Activated T-helper 1 cell treated with anti-CD3 and anti-CD28 coated beads, Interleukin-12 subunit alpha, Interleukin-12 subunit beta, Interleukin-2, Interleukin-4 antibody, amounts not matched to agents 30 ng/mL and 10 ng/mL and 1 ng/mL, durations not matched to agents 14 hours and 24 hours and 36 hours (primary cell): ENCODE measurements at regions of chr6 and their contacts with region 1.

Region 1: DNA sequence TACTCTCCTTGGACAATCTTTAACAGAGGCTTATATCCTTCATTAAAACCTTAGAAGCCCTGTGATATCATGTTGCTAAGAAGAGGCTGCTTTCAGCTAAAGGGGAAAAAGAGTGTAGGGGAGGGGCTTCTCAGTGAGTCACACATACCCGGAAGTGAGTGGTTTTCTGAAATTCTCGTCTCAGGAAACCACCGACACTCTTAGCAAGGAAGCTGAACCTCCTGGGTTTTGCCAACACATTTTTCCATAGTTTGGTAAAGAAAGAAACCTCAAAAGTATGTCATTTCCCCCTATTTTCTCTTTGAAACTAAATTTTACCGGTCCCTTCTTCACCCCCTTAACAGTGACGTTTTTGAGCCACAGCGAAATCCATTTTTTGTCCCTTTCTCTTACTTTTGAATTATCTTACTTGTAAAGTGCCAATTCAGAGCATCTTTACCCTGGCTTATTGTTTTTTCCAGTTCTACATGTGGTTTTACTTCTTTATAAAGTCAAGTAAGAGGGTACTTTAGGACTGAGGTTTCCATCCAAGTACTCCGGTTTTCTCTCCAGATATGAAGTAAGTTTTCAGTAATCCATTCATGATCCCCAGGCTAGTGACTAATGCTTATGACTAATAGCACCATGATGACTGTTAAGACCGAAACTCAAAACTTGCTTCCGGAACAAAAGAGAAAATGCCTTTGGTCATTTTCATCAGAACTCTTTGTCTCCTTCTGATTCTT is 219.3 kb downstream of the ARHGAP18 start:
- DNase-seq: peak; percentile 69
- H3K4me3 Mint-ChIP-seq: peak overlapping the region; percentile 77
- H3K27ac Mint-ChIP-seq: peak overlapping the region; percentile 99
- H3K4me1 Mint-ChIP-seq: peaks cover 68% of the 10 kb centered on the region
- H3K27me3 Mint-ChIP-seq: no peaks in the 10 kb centered on the region

Region 2: GRCh38 chr6:129280749-129281148 is 209.9 kb before region 1 on chr6:
- intact Hi-C with region 1: loop called (anchors 5 kb)
- DNase-seq: peak; percentile 34
- H3K4me3 Mint-ChIP-seq: peak overlapping the region; percentile 6
- H3K27ac Mint-ChIP-seq: no peak overlapping the region
- H3K4me1 Mint-ChIP-seq: peaks cover 24% of the 10 kb centered on the region
- H3K27me3 Mint-ChIP-seq: peaks cover 13% of the 10 kb centered on the region

Region 3: DNA sequence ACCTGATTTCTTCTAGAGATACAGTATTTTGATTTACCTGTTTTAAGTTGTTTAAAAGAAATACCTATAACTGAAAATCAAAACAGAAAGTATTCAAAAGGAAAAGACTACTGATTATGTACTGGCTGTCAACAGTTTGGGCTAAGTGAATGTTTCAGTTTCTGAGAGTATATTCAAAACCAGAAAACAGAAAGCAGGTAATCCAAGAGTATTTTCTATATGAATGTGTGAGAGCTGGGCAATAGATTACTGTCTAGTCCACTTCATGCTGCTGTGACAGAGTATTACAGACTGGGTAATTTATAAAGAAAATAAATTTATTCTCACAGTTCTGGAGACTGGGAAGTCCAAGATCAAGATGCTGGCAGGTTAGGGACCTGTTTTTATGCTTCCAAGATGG is 41.7 kb before region 1 on chr6:
- intact Hi-C with region 1: loop called (anchors 1 kb)
- DNase-seq: no peak
- H3K4me3 Mint-ChIP-seq: peak overlapping the region; percentile 6
- H3K27ac Mint-ChIP-seq: no peak overlapping the region
- H3K4me1 Mint-ChIP-seq: peaks cover 74% of the 10 kb centered on the region
- H3K27me3 Mint-ChIP-seq: peaks cover 1% of the 10 kb centered on the region

Region 4: DNA sequence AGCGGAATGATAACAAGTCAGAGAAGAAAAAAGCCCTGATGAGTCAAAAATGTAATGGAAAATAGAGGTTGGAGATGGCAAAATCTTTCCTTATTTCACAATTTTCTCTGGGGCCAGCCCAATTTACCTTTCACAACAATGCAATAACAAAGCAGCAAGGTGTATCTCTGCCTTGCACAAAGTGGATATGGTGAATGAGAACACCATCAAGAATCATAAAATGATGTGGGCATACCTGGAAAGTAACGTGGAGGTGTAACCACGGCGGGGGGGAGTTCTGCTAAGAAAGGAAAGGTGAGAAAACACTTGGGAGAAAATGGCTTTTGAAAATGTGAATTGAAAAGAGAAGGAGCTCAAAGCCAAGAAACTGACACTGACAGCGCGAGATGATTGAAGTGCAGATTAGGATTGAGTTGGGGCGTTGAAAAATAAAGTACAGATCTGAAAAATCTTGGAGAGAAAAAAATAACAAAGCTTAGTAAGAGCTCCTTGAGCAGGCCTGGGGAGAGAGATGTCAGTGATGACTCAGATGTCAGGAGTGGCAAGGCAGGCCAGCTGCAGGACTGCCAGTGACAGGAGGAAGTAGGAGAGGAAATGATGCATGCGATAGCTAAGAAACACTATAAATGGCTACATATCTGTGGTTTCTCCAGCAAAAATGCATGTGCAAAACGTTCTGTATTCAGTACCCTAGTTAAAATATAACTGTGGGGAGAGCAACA is 193.1 kb after region 1 on chr6:
- intact Hi-C with region 1: loop called (anchors 2 kb)
- DNase-seq: peak; percentile 55
- H3K4me3 Mint-ChIP-seq: peak overlapping the region; percentile 47
- H3K27ac Mint-ChIP-seq: peak overlapping the region; percentile 77
- H3K4me1 Mint-ChIP-seq: peaks cover 63% of the 10 kb centered on the region
- H3K27me3 Mint-ChIP-seq: no peaks in the 10 kb centered on the region

Region 5: GRCh38 chr6:130215526-130215925 is 724.8 kb after region 1 on chr6:
- intact Hi-C with region 1: loop called (anchors 5 kb)
- DNase-seq: peak; percentile 49
- H3K4me3 Mint-ChIP-seq: peak overlapping the region; percentile 70
- H3K27ac Mint-ChIP-seq: peak overlapping the region; percentile 67
- H3K4me1 Mint-ChIP-seq: peaks cover 70% of the 10 kb centered on the region
- H3K27me3 Mint-ChIP-seq: no peaks in the 10 kb centered on the region